Aorta (tissue), 5 donors: ENCODE measurements at regions of chr4 and their contacts with region 1.

Region 1: GRCh38 chr4:147866532-147867271 is 134.8 kb downstream of the ARHGAP10 start:
- DNase-seq: peak; percentile 94 to 97
- ATAC-seq: peak; percentile 92
- H3K4me3 ChIP-seq: no peak overlapping the region
- H3K27ac ChIP-seq: no peak overlapping the region
- H3K4me1 ChIP-seq: peaks cover 6 to 7% of the 10 kb centered on the region in 2 donors
- H3K27me3 ChIP-seq: no peaks in the 10 kb centered on the region

Region 2: GRCh38 chr4:147707865-147708672 is 158.6 kb before region 1 on chr4:
- intact Hi-C with region 1: loop called (anchors 1 to 2 kb)
- DNase-seq: no peak
- ATAC-seq: peak; percentile 79
- H3K4me3 ChIP-seq: no peak overlapping the region
- H3K27ac ChIP-seq: no peak overlapping the region
- H3K4me1 ChIP-seq: no peaks in the 10 kb centered on the region
- H3K27me3 ChIP-seq: no peaks in the 10 kb centered on the region

Region 3: DNA sequence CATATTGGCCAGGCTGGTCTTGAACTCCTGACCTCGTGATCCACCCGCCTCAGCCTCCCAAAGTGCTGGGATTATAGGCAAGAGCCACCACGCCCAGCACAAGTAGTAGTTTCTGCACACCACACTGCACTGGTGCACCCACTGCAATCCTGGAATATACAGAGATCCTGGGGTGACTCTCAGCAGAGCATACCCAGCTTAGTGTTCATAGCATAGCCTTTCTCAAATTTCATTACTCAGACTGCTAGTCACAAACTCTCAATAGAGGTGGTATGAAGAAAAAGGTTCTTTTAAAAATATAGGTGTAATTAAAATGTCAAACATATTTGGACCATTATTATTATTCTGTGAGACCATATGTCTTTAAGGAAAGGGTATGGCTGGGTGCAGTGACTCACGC is 141.0 kb before region 1 on chr4:
- intact Hi-C with region 1: loop called in 1 of 2 experiments (anchors 5 kb)
- DNase-seq: no peak
- ATAC-seq: no peak
- H3K4me3 ChIP-seq: no peak overlapping the region
- H3K27ac ChIP-seq: no peak overlapping the region
- H3K4me1 ChIP-seq: no peaks in the 10 kb centered on the region
- H3K27me3 ChIP-seq: no peaks in the 10 kb centered on the region

Region 4: GRCh38 chr4:147822128-147822527 is 44.6 kb before region 1 on chr4:
- intact Hi-C with region 1: loop called in 1 of 2 experiments (anchors 5 kb)
- DNase-seq: peak in 1 of 2 donors; percentile 77
- ATAC-seq: no peak
- H3K4me3 ChIP-seq: no peak overlapping the region
- H3K27ac ChIP-seq: no peak overlapping the region
- H3K4me1 ChIP-seq: peaks cover 5 to 17% of the 10 kb centered on the region in 2 donors
- H3K27me3 ChIP-seq: no peaks in the 10 kb centered on the region

Region 5: DNA sequence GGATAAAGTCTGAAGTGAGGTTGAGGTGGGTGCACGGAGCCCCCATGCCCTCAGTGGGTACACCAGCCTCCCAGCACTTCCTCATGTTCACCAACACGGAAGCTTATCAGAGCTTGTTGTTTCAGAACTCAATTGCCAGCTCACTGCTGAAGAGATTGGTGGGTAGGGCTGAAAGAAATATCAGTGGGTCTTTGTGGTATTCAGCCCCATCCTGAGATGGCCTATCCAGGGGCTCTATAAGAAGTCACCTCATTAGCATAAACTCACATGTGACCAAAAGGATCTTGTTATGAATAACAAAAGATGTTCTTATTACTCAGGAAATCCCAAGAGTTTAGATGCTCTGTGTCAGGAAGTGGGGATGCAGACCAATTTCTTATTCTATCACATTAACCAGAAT is 42.5 kb after region 1 on chr4:
- intact Hi-C with region 1: no loop called
- DNase-seq: no peak
- ATAC-seq: no peak
- H3K4me3 ChIP-seq: no peak overlapping the region
- H3K27ac ChIP-seq: no peak overlapping the region
- H3K4me1 ChIP-seq: no peaks in the 10 kb centered on the region
- H3K27me3 ChIP-seq: no peaks in the 10 kb centered on the region